ENCODE measurements at regions of chr1 and their contacts with region 1.

Region 1: GRCh38 chr1:12619792-12620487 is 1.9 kb upstream of the DHRS3 start:
- DNase-seq: no peak
- H3K4me3 ChIP-seq: peak overlapping the region; percentile 82
- CTCF ChIP-seq: peak; percentile 93

Region 2: DNA sequence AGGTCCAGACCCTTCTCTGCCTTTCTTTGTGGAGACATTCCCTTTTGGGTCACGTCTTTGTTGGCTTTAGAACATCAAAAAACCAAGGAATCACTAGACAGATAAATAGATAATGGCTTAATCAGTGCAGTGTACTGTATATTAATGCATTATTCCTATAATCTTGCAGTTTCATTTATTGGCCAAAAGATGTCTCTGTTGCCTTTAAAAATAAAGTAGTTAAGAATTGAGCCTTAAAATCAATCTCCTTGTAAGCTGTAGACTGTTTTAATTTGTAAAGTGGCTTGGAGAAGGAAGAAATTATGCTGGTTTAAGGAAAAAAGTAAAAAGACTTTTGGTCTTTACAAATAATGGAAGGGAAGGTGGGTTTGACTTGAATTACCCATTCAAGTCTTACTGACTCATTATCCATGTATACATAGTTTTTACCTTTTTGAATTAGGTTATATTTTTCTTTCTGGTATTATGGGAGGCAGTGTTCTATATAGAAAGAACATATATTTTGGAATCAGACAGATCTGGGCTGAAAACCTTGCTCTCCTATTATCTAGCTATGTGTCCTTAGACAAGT is 305.5 kb before region 1 on chr1:
- CTCF ChIA-PET with region 1: interaction called, 86 read pairs
- POLR2A ChIA-PET with region 1: interaction called, 3 read pairs
- DNase-seq: no peak
- H3K4me3 ChIP-seq: no peak overlapping the region
- CTCF ChIP-seq: no peak

Region 3: GRCh38 chr1:12407050-12407961 is 212.6 kb before region 1 on chr1:
- CTCF ChIA-PET with region 1: interaction called, 71 read pairs
- POLR2A ChIA-PET with region 1: interaction called, 4 read pairs
- DNase-seq: no peak
- H3K4me3 ChIP-seq: no peak overlapping the region
- CTCF ChIP-seq: peak; percentile 25

Region 4: DNA sequence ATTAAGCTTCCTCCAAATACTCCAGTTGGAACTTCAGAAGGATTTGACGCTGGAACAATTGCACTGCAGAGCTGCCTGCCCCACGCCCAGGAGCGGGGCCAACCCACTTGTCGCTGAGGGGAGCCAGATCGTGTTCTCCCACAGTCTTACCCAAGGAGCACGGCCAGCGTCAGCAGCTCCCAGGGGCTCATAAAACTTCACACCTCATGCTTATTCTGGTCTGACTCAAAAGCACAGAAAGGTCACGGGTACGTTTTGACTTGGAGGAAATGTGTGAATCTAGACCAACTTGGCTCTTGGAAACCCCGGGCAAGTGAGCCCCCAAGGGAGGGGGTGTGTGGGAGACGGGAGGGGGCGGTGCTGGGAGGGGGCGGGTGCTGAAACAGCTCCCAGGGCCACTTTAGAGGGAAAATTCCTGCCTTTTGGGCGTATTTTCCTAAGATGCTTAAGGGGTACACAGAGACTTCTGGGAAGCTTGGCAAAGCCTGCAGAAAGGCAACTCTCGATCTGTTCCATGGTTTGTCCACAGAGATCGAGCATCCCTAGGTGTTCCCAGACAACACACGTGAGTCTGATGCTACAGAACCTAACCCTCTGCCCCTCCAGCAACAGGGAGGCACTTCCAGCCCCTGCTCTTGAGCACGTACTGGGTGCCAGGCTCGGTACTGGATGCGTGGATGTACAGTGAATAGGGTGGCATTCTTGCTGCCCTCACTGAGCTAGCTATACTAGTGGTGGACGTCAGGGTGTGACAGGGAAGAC is 100.8 kb before region 1 on chr1:
- CTCF ChIA-PET with region 1: no interaction called
- POLR2A ChIA-PET with region 1: no interaction called
- DNase-seq: no peak
- H3K4me3 ChIP-seq: no peak overlapping the region
- CTCF ChIP-seq: no peak

Region 5: GRCh38 chr1:12596007-12596821 is 23.7 kb before region 1 on chr1:
- CTCF ChIA-PET with region 1: interaction called, 9 read pairs
- POLR2A ChIA-PET with region 1: interaction called, 25 read pairs
- DNase-seq: peak; percentile 95
- H3K4me3 ChIP-seq: peak overlapping the region; percentile 41
- CTCF ChIP-seq: no peak

Region 6: DNA sequence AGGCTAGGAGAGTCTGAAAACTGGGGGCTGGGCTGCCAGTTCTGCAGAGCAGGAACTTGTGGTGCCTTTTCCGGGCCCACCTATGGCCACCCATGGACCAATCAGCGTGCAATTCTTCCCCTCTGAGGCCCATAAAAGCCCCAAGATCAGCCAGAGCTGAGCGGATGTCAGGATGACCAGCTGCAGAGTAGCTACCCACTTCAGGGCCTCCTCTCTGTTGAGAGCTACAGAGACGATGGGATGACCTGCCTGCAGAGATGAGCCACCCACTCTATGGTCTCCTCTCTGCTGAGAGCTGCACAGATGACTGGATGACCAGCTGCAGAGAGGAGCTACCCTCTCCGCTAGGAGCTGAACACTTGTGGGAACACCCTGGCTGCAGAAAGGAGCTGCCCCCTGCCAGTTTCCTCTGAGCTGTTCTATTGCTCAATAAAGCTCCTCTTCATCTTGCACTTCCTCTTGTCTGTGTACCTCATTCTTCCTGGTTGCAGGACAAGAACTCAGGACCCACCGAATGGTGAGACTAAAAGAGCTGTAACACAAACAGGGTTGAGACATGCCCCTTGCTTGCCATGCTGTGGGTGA is 11.1 kb after region 1 on chr1:
- CTCF ChIA-PET with region 1: interaction called, 10 read pairs
- POLR2A ChIA-PET with region 1: interaction called, 3 read pairs
- DNase-seq: no peak
- H3K4me3 ChIP-seq: no peak overlapping the region
- CTCF ChIP-seq: no peak

Region 7: GRCh38 chr1:12760256-12760795 is 140.4 kb after region 1 on chr1:
- CTCF ChIA-PET with region 1: no interaction called
- POLR2A ChIA-PET with region 1: no interaction called
- DNase-seq: no peak
- H3K4me3 ChIP-seq: no peak overlapping the region
- CTCF ChIP-seq: no peak

Measured in AG04449 (cell line).